ENCODE measurements at regions of chr22 and their contacts with region 1.

Region 1: DNA sequence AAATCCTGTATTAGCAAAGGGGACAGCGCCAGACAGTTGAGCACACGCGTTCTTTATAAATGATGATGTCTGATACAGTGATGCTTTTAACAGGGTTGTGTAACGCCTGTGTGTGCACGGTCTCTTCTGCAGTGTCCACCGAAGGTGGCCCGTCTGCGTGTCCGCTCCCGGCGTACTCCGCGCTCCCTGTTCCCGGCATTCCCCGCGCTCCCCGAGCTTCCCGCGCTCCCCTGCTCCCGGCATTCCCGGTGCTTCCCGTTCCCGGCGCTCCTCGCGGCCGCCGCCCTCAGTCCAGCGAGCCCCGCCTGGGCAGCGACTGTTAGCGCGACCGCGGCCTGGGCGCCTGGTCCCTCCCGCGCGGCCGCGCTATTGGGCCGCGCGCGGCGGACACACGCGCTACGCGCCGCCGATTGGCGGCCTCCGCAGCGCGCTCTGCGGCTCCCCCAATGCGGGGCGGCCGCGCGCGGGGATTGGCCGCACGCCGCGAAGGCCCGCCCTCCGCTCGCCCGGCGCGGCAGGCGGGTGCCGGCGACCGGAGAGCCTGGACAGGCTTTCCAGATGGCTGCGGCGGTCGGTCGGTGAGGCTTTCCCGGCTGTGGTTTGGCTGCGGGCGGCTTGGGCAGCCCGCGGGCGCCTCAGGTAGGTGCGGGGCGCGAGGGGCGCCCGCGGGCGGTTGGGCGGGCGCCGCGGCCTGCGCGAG is at the start of gene DGCR8:
- DNase-seq: peak in 1 of 2 donors; percentile 93
- H3K4me3 ChIP-seq: peak within 1 kb of the TSS; percentile 76 to 79
- H3K27ac ChIP-seq: peak within 1 kb of the TSS; percentile 81
- H3K4me1 ChIP-seq: peaks cover 51% of the 10 kb centered on the region
- H3K27me3 ChIP-seq: no peaks in the 10 kb centered on the region
- CTCF ChIP-seq: no peak
- POLR2A ChIP-seq: peak in 1 of 2 donors; percentile 12
- total RNA-seq, gene DGCR8: 27.3 TPM

Region 2: GRCh38 chr22:19679522-19680101 is 400.3 kb before region 1 on chr22:
- intact Hi-C with region 1: no loop called
- DNase-seq: no peak
- H3K4me3 ChIP-seq: no peak overlapping the region
- H3K27ac ChIP-seq: peak overlapping the region; percentile 16
- H3K4me1 ChIP-seq: no peaks in the 10 kb centered on the region
- H3K27me3 ChIP-seq: no peaks in the 10 kb centered on the region
- CTCF ChIP-seq: peak; percentile 72 to 93 (median 86)
- POLR2A ChIP-seq: no peak

Region 3: GRCh38 chr22:19986410-19987341 is 93.2 kb before region 1 on chr22:
- intact Hi-C with region 1: no loop called
- DNase-seq: no peak
- H3K4me3 ChIP-seq: peak overlapping the region; percentile 57
- H3K27ac ChIP-seq: peak overlapping the region; percentile 62
- H3K4me1 ChIP-seq: peaks cover 32% of the 10 kb centered on the region
- H3K27me3 ChIP-seq: no peaks in the 10 kb centered on the region
- CTCF ChIP-seq: no peak
- POLR2A ChIP-seq: peak in 1 of 2 donors; percentile 40

Region 4: GRCh38 chr22:20020533-20021195 is 59.2 kb before region 1 on chr22 and contains the start of gene TANGO2:
- intact Hi-C with region 1: loop called (anchors 5 kb)
- DNase-seq: no peak
- H3K4me3 ChIP-seq: peak within 1 kb of the TSS; percentile 85 to 94
- H3K27ac ChIP-seq: peak within 1 kb of the TSS; percentile 47
- H3K4me1 ChIP-seq: peaks cover 32% of the 10 kb centered on the region
- H3K27me3 ChIP-seq: no peaks in the 10 kb centered on the region
- CTCF ChIP-seq: no peak
- POLR2A ChIP-seq: peak in 1 of 2 donors; percentile 70
- total RNA-seq, gene TANGO2: 21.4 TPM

Region 5: DNA sequence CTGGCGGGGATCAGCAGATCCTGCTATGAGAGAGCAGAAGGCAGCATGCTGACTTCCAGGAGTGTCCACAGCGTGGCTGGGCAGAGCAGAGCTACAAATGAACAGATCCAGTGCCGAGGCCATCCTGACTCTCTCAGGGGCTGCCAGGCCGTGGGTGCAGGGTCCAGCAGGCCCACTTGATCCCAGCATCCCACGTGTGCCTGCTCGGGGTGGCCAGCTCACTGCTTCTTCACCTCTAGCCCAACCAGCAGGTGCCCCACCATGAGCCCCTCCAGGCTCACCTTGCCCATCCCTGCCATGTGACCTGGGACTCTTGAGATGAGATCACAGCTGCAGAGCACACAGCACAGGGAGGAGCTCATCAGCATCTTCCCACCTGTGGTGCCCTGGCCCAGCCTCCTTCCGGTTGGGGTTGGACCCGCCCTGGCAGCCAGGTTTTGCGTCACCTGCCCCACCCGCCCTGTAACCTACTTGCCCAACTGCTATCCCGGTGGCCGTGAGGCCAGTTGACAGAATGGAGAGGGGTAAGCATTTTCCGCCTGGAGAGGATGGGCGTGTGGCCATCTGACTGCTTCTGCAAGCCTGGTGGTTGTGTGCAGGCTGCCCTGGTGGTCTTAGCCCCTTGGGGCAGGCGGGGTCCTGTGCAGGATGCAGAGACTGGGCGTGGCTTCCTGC is 48.0 kb before region 1 on chr22:
- intact Hi-C with region 1: loop called (anchors 2 kb)
- DNase-seq: no peak
- H3K4me3 ChIP-seq: no peak overlapping the region
- H3K27ac ChIP-seq: no peak overlapping the region
- H3K4me1 ChIP-seq: peaks cover 17% of the 10 kb centered on the region
- H3K27me3 ChIP-seq: no peaks in the 10 kb centered on the region
- CTCF ChIP-seq: no peak
- POLR2A ChIP-seq: no peak

Region 6: DNA sequence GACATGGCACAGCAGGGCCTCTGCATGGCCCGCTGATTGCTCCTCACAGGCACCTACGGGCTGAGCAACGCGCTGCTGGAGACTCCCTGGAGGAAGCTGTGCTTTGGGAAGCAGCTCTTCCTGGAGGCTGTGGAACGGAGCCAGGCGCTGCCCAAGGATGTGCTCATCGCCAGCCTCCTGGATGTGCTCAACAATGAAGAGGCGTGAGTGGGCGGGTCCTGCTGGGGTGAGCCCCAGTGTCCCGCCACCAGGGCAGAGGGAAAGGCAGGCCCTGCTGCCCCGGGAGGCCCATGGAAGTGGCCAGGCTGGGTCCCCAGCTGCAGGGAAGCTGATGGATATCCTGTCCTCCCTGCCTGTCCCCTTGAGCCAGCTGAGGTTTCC is 18.4 kb before region 1 on chr22:
- intact Hi-C with region 1: no loop called
- DNase-seq: no peak
- H3K4me3 ChIP-seq: no peak overlapping the region
- H3K27ac ChIP-seq: no peak overlapping the region
- H3K4me1 ChIP-seq: peaks cover 16% of the 10 kb centered on the region
- H3K27me3 ChIP-seq: no peaks in the 10 kb centered on the region
- CTCF ChIP-seq: no peak
- POLR2A ChIP-seq: no peak

Region 7: GRCh38 chr22:20130739-20131596 is 51.1 kb after region 1 on chr22:
- intact Hi-C with region 1: loop called (anchors 2 kb)
- DNase-seq: no peak
- H3K4me3 ChIP-seq: peak overlapping the region; percentile 97 to 100
- H3K27ac ChIP-seq: peak overlapping the region; percentile 89
- H3K4me1 ChIP-seq: peaks cover 48% of the 10 kb centered on the region
- H3K27me3 ChIP-seq: no peaks in the 10 kb centered on the region
- CTCF ChIP-seq: no peak
- POLR2A ChIP-seq: no peak

Region 8: DNA sequence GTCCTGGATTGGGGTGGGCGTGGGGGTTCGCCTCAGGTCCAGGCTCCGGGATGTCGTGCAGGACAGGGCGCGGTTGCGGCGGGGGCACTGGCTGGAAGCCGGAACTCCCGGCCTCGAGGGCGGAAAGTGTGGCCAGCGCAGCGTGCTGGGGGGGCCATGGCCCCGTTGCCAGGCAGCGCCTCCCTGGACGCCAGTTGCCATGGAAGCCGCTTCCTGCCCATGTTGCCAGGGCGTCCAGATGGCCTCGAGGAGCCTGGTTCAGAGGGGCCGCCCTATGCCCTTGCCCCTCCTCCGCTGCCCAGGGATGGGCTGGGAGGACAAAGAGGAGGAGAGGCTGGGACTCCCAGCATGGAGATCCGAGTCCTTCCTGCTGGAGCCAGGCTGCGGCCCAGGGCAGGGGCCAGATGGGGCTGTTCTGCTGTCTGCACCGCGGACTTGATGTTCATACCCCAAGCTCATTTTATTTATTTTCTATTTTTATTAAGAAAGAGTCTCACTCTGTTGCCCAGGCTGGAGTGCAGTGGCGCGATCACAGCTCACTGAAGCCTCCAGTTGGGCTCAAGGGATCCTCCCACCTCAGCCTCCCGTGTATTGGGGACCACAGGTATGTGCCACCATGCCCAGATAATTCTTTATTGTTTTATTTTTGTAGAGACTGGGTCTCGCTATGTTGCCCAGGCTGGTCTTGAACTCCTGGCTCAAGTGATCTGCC is 75.6 kb after region 1 on chr22:
- intact Hi-C with region 1: no loop called
- DNase-seq: no peak
- H3K4me3 ChIP-seq: peak overlapping the region in 1 of 2 donors; percentile 19
- H3K27ac ChIP-seq: no peak overlapping the region
- H3K4me1 ChIP-seq: no peaks in the 10 kb centered on the region
- H3K27me3 ChIP-seq: no peaks in the 10 kb centered on the region
- CTCF ChIP-seq: no peak
- POLR2A ChIP-seq: no peak

Measured in vagina (tissue), 2 donors.